HEK293 (cell line): ENCODE measurements at regions of chr7 and their contacts with region 1.

Region 1: GRCh38 chr7:78020136-78020873 is 221.7 kb downstream of the PHTF2 start:
- H3K4me3 ChIP-seq: peak overlapping the region; percentile 50
- H3K27ac ChIP-seq: peak overlapping the region; percentile 92
- H3K4me1 ChIP-seq: peaks cover 19% of the 10 kb centered on the region
- CTCF ChIP-seq: peak; percentile 49; the same call in 1 of the 2 replicates

Region 2: DNA sequence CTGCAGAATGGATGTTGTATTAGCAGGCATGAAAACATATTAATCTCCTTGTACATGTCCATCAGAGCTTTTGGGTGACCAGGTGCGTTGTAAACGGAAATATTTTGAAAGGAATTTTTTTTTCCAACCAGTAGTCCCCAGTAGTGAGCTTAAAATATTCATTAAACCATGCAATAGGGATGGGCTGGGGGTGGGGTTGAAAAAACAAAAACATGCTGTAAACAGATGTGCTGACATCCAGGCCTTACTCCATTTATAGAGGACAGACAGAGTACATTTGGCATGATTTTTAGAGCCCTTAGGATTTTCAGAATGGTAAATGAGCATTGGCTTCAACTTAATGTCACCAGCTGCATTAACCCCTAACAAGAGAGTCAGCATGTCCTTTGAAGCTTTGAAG is 433.0 kb before region 1 on chr7:
- CTCF ChIA-PET with region 1: no interaction called
- POLR2A ChIA-PET with region 1: no interaction called
- H3K4me3 ChIP-seq: no peak overlapping the region
- H3K27ac ChIP-seq: no peak overlapping the region
- H3K4me1 ChIP-seq: no peaks in the 10 kb centered on the region
- CTCF ChIP-seq: no peak

Region 3: GRCh38 chr7:77808517-77808916 is 211.8 kb before region 1 on chr7:
- CTCF ChIA-PET with region 1: no interaction called
- POLR2A ChIA-PET with region 1: no interaction called
- H3K4me3 ChIP-seq: no peak overlapping the region
- H3K27ac ChIP-seq: no peak overlapping the region
- H3K4me1 ChIP-seq: no peaks in the 10 kb centered on the region
- CTCF ChIP-seq: no peak

Region 4: GRCh38 chr7:77971726-77972125 is 48.6 kb before region 1 on chr7:
- CTCF ChIA-PET with region 1: no interaction called
- POLR2A ChIA-PET with region 1: no interaction called
- H3K4me3 ChIP-seq: no peak overlapping the region
- H3K27ac ChIP-seq: no peak overlapping the region
- H3K4me1 ChIP-seq: no peaks in the 10 kb centered on the region
- CTCF ChIP-seq: no peak

Region 5: DNA sequence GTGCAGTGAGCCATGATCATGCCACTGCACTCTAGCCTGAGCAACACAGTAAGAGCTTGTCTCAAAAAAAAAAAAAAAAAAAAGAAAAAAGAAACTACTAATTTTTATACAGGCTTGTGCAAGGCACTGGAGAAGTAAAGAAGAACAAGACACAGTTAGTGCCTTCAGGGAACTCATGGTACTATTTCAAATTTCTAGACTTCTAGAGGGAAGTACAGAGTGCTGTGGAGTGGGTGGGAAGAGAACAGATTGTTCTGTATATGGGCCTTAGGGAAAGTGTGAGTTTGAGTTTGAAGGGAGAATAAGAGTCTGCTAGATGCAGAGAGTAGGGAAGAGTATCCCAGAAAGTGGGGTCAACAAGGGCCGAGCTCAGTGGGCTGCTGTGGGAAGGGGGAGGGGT is 13.1 kb after region 1 on chr7:
- CTCF ChIA-PET with region 1: interaction called, 22 read pairs
- POLR2A ChIA-PET with region 1: interaction called, 3 read pairs
- H3K4me3 ChIP-seq: no peak overlapping the region
- H3K27ac ChIP-seq: no peak overlapping the region
- H3K4me1 ChIP-seq: no peaks in the 10 kb centered on the region
- CTCF ChIP-seq: no peak

Region 6: GRCh38 chr7:78039790-78040776 is 19.8 kb after region 1 on chr7:
- CTCF ChIA-PET with region 1: interaction called, 37 read pairs
- POLR2A ChIA-PET with region 1: interaction called, 3 read pairs
- H3K4me3 ChIP-seq: peak overlapping the region; percentile 18; the same call in 1 of the 2 replicates
- H3K27ac ChIP-seq: no peak overlapping the region
- H3K4me1 ChIP-seq: no peaks in the 10 kb centered on the region
- CTCF ChIP-seq: no peak; the same call in 1 of the 2 replicates

Region 7: GRCh38 chr7:78101076-78101475 is 80.8 kb after region 1 on chr7:
- CTCF ChIA-PET with region 1: no interaction called
- POLR2A ChIA-PET with region 1: no interaction called
- H3K4me3 ChIP-seq: no peak overlapping the region
- H3K27ac ChIP-seq: no peak overlapping the region
- H3K4me1 ChIP-seq: no peaks in the 10 kb centered on the region
- CTCF ChIP-seq: no peak

Region 8: DNA sequence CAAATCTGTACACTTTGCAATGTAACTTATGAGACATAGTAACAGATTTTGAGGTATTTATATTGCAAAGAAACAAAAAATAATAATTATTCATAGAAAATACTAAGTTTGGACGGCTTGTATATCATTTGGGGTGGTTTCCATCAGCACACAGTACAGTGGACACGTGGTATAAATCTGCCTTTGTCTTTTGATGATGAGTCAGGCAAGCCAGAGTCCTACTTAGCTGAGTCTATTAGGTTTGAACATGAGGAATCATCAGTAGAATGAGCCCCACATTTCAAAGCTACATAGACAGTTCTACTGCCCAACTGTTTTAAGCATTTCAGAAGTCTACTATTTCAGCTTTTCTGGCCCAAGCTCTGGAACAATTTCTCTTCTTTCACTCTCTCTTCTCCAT is 581.4 kb after region 1 on chr7:
- CTCF ChIA-PET with region 1: interaction called, 12 read pairs
- POLR2A ChIA-PET with region 1: no interaction called
- H3K4me3 ChIP-seq: no peak overlapping the region
- H3K27ac ChIP-seq: no peak overlapping the region
- H3K4me1 ChIP-seq: no peaks in the 10 kb centered on the region
- CTCF ChIP-seq: no peak